HEK293 (cell line): ENCODE measurements at regions of chr14 and their contacts with region 1.

Region 1: DNA sequence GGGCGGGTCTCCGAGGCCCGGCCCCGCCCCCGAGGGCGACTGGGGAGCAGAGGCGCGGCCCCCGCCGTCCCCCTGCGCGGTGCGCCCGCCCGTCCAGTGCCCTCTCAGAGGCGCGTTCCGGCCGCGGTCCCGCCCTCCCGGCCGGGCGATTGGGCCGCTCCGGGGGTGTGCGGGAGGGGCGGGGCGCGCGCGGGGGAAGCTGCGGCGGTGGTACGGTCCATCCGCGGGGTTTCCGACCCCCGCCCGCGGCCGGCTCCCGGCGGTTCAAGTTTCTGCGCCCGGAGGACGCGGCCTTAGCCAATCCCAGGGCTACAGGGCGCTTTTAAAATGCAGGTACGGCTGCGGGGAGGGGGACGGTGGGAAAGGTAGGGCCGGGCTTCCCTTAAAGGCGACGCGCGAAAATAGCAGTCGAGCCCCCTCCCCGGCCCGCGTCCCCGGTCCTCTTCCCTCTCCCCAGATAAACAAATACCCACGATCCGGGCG is 317 bp upstream of the CCDC85C start:
- H3K4me3 ChIP-seq: peak overlapping the region; percentile 64
- H3K27ac ChIP-seq: peak overlapping the region; percentile 93
- H3K4me1 ChIP-seq: peaks cover 15% of the 10 kb centered on the region
- CTCF ChIP-seq: no peak

Region 2: DNA sequence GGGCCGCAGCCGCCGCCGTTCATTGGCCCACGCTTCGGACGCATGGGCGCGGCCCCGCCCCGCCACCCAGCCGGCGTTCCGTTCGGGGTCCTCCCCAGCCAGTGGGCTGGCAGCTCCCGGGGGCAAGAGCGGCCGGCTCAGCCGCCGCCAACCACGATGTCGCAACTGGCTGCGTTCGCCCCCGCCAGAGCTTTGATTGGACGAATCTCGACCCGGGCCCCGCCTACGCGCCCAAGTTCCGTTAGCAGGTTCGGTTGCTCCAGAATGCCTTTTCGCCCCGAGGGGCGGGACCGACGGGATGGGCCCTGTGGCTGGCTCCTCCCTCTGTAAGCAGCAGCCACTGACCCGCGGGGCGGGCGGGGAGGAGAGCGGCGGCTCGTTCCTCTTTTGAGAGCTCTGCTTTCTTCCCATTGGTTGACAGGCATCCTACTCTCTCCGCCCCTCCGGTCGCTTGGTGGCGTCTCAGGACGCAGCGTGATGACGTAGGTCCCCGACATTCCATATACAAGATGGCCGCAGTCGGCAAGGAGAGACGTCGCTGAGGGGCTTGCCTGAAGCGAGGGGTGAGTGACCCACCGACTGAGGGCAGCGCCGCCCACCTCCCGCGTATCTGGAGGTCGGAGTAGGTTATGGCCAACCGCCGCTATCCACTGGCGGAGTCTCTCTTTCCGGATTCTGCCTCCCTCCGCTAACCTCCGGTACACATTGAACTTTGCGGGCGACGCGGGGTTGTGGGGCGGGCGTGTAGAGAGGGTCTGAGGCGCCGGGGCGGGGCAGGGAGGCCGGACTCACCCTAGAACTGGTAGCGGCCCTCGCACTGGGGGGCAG is 123.2 kb before region 1 on chr14 and contains the start of gene CCNK:
- CTCF ChIA-PET with region 1: interaction called, 3 read pairs
- POLR2A ChIA-PET with region 1: interaction called, 12 read pairs
- H3K4me3 ChIP-seq: peak within 1 kb of the TSS; percentile 96
- H3K27ac ChIP-seq: peak within 1 kb of the TSS; percentile 88
- H3K4me1 ChIP-seq: peaks cover 10% of the 10 kb centered on the region
- CTCF ChIP-seq: no peak; the same call in 1 of the 2 replicates

Region 3: GRCh38 chr14:99575043-99576023 is 29.0 kb before region 1 on chr14:
- CTCF ChIA-PET with region 1: interaction called, 6 read pairs
- POLR2A ChIA-PET with region 1: interaction called, 20 read pairs
- H3K4me3 ChIP-seq: no peak overlapping the region
- H3K27ac ChIP-seq: peak overlapping the region; percentile 38; the same call in 1 of the 2 replicates
- H3K4me1 ChIP-seq: peaks cover 52% of the 10 kb centered on the region
- CTCF ChIP-seq: 0 out of 2 replicates have a peak, but pooled peaks have one; percentile 35

Region 4: DNA sequence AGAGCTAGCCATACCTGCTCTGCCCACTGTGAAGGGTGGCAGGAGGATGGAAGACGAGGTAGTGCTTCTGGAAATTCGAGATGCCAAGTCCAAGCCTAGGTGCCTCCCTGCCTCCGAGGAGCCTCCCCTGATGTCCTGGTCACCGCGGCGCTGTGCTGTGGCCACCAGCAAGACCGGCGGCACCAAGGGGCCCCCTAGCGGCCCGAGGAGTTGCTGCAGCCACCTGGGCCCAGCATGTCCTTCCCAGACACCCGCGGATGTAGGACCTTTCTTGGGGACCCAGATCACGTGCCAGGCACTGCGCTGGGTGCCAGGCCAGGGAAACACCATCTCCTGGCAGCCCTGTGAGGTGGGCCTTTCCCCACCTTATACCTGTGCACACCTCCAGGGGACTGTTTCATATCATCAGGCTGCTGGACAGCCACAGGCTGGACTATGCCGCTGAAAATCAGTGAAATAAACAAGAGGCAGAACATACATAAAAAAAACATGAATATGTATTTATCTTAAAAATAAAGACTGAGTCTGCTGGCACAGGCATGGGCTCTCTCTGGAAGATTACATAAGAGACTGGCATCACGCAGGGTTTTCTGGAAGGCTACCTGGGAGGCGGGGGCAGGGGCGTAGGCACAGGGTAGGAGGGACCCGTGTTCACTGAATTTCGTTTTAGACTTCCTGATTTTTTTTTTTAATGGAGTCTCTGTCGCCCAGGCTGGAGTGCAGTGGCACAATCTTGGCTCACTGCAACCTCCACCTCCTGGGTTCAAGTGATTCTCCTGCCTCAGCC is 24.7 kb after region 1 on chr14:
- CTCF ChIA-PET with region 1: interaction called, 14 read pairs
- POLR2A ChIA-PET with region 1: no interaction called
- H3K4me3 ChIP-seq: no peak overlapping the region
- H3K27ac ChIP-seq: no peak overlapping the region
- H3K4me1 ChIP-seq: no peaks in the 10 kb centered on the region
- CTCF ChIP-seq: peak; percentile 98